Right cardiac atrium (tissue), 5 donors: ENCODE measurements at regions of chr3 and their contacts with region 1.

Region 1: DNA sequence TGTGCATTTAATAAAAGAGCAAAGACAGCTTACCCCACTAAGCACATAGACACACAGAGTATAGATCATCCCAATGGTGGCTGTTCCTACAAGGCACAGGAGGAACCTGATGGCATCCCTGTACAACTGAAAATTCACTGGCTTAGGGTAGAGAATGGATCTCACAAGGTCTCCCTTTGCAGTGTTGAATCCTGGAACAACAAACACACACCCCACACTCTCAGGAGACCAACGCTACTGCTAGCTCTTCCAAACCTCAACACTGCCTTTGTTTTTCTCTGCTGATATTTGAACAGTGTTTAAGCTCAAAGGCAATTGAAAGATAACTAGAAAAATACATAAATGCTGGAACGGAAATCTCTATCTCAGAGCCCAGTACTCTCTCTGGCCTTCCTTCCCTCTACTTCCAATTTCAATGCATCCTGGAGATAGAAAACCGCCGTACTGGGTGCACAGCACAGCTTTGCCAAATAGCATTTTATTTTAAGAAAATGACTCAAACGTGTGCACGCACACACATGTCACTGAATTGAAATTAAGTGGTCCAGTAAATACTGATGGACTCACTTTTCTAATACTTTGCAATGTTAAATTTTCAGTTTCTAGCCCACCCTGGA is 87.5 kb upstream of the ATP13A5 start:
- DNase-seq: no peak
- ATAC-seq: no peak
- H3K4me3 ChIP-seq: no peak overlapping the region
- H3K27ac ChIP-seq: no peak overlapping the region
- H3K4me1 ChIP-seq: no peaks in the 10 kb centered on the region
- H3K27me3 ChIP-seq: no peaks in the 10 kb centered on the region

Region 2: DNA sequence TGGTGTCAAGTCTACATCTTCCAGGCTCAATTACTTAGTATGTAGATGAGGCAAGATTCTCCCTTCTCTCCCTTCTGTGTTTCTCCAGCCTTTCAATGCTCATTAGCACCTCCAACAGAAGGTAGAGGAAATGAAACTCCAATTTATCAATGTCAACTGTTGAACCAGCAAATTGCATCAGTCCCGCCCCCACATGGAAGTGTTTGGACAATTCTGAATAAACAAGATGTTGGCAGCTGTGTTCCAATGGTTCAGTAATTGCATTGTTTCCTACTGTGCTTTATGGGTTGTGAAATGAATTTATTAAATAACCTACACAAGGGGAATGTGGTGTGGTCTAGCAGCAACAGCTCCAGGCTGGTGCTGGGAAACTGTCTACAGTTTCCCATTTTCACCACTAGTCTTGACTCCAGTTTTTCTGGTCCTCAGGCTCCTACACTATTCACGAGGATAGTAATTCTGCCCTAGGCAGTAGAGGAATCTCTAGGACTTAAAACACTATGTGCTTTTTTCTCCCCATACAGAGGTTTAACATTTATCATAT is 640.4 kb before region 1 on chr3:
- intact Hi-C with region 1: loop called in 1 of 4 experiments (anchors 10 kb)
- DNase-seq: no peak
- ATAC-seq: peak; percentile 44 to 45
- H3K4me3 ChIP-seq: no peak overlapping the region
- H3K27ac ChIP-seq: no peak overlapping the region
- H3K4me1 ChIP-seq: peaks cover 1% of the 10 kb centered on the region
- H3K27me3 ChIP-seq: no peaks in the 10 kb centered on the region

Region 3: GRCh38 chr3:193564012-193564411 is 97.9 kb after region 1 on chr3:
- intact Hi-C with region 1: loop called in 2 of 4 experiments (anchors 5 kb)
- DNase-seq: no peak
- ATAC-seq: no peak
- H3K4me3 ChIP-seq: no peak overlapping the region
- H3K27ac ChIP-seq: no peak overlapping the region
- H3K4me1 ChIP-seq: no peaks in the 10 kb centered on the region
- H3K27me3 ChIP-seq: no peaks in the 10 kb centered on the region

Region 4: GRCh38 chr3:193572426-193572908 is 106.4 kb after region 1 on chr3:
- intact Hi-C with region 1: loop called in 2 of 4 experiments (anchors 5 kb)
- DNase-seq: peak in 2 of 3 donors; percentile 35 to 61
- ATAC-seq: peak; percentile 65 to 66
- H3K4me3 ChIP-seq: no peak overlapping the region
- H3K27ac ChIP-seq: no peak overlapping the region
- H3K4me1 ChIP-seq: no peaks in the 10 kb centered on the region
- H3K27me3 ChIP-seq: no peaks in the 10 kb centered on the region

Region 5: GRCh38 chr3:193645806-193646205 is 179.7 kb after region 1 on chr3:
- intact Hi-C with region 1: no loop called
- DNase-seq: no peak
- ATAC-seq: peak in 1 of 2 donors; percentile 45
- H3K4me3 ChIP-seq: no peak overlapping the region
- H3K27ac ChIP-seq: no peak overlapping the region
- H3K4me1 ChIP-seq: no peaks in the 10 kb centered on the region
- H3K27me3 ChIP-seq: no peaks in the 10 kb centered on the region